Activated CD8-positive, alpha-beta T cell treated with anti-CD3 and anti-CD28 coated beads for 36 hours (primary cell): ENCODE measurements at regions of chr16 and their contacts with region 1.

Region 1: GRCh38 chr16:19595043-19595767 is 39.7 kb downstream of the VPS35L start:
- DNase-seq: no peak
- ATAC-seq: no peak
- H3K4me3 Mint-ChIP-seq: no peak overlapping the region
- H3K27ac Mint-ChIP-seq: no peak overlapping the region
- H3K4me1 Mint-ChIP-seq: no peaks in the 10 kb centered on the region
- H3K27me3 Mint-ChIP-seq: no peaks in the 10 kb centered on the region
- CTCF ChIP-seq: no peak

Region 2: GRCh38 chr16:19583665-19584300 is 11.4 kb before region 1 on chr16:
- CTCF ChIA-PET with region 1: interaction called, 10 read pairs
- POLR2A ChIA-PET with region 1: no interaction called
- intact Hi-C with region 1: no loop called
- DNase-seq: peak; percentile 32
- ATAC-seq: peak; percentile 73
- H3K4me3 Mint-ChIP-seq: no peak overlapping the region
- H3K27ac Mint-ChIP-seq: no peak overlapping the region
- H3K4me1 Mint-ChIP-seq: peaks cover 10% of the 10 kb centered on the region
- H3K27me3 Mint-ChIP-seq: no peaks in the 10 kb centered on the region
- CTCF ChIP-seq: peak; percentile 76